Pancreas (tissue), 10 donors: ENCODE measurements at regions of chr7 and their contacts with region 1.

Region 1: GRCh38 chr7:76262683-76263402 is 39.6 kb upstream of the HSPB1 start:
- DNase-seq: peak in 4 of 6 donors; percentile 48 to 66 (median 59)
- ATAC-seq: peak; percentile 73 to 90 (median 88)
- H3K4me3 ChIP-seq: no peak overlapping the region
- H3K27ac ChIP-seq: no peak overlapping the region
- H3K4me1 ChIP-seq: peaks cover 5 to 7% (median 5%) of the 10 kb centered on the region in 3 donors
- H3K27me3 ChIP-seq: peaks cover 0 to 11% (median 0%) of the 10 kb centered on the region in 4 donors
- CTCF ChIP-seq: peak in 3 of 4 donors; percentile 33 to 71 (median 66)

Region 2: GRCh38 chr7:75905785-75906604 is 356.8 kb before region 1 on chr7:
- intact Hi-C with region 1: no loop called
- DNase-seq: peak in 2 of 6 donors; percentile 40 to 42
- ATAC-seq: peak; percentile 24 to 81 (median 80)
- H3K4me3 ChIP-seq: no peak overlapping the region
- H3K27ac ChIP-seq: no peak overlapping the region
- H3K4me1 ChIP-seq: no peaks in the 10 kb centered on the region
- H3K27me3 ChIP-seq: no peaks in the 10 kb centered on the region
- CTCF ChIP-seq: no peak

Region 3: GRCh38 chr7:76185187-76185896 is 77.5 kb before region 1 on chr7:
- intact Hi-C with region 1: loop called in 2 of 3 experiments (anchors 5 to 10 kb)
- DNase-seq: no peak
- ATAC-seq: no peak
- H3K4me3 ChIP-seq: no peak overlapping the region
- H3K27ac ChIP-seq: no peak overlapping the region
- H3K4me1 ChIP-seq: no peaks in the 10 kb centered on the region
- H3K27me3 ChIP-seq: no peaks in the 10 kb centered on the region
- CTCF ChIP-seq: no peak

Region 4: GRCh38 chr7:76397409-76398183 is 134.8 kb after region 1 on chr7:
- intact Hi-C with region 1: no loop called
- DNase-seq: peak; percentile 74 to 94 (median 88)
- ATAC-seq: peak; percentile 33 to 75 (median 68)
- H3K4me3 ChIP-seq: peak overlapping the region; percentile 37 to 51 (median 50)
- H3K27ac ChIP-seq: no peak overlapping the region
- H3K4me1 ChIP-seq: peaks cover under 1 to 8% (median 2%) of the 10 kb centered on the region in 3 donors
- H3K27me3 ChIP-seq: no peaks in the 10 kb centered on the region
- CTCF ChIP-seq: no peak